Heart right ventricle (tissue), 16 donors: ENCODE measurements at regions of chr4 and their contacts with region 1.

Region 1: DNA sequence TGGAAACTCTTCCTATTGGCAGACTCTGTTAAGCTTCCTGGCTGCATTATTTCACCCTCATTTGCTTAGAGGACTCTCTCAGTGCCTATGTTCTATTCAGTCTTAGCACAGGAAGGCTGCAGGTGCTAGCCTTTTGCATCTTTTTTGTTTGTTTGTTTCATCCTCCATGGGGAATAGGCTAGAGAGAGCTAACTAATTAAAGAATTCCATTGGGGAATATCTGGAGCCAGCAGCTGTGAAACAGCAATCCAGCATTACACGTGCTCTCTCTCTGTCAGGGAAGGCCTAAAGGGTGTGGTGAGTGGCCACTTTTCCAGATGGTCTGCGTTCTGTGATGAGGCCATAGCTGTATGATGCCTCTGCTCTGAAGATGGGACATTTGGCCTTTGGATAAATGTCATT is 633.6 kb downstream of the SPRY1 start:
- DNase-seq: peak in 1 of 2 donors; percentile 54
- ATAC-seq: peak; percentile 88 to 98 (median 92)
- H3K4me3 ChIP-seq: no peak overlapping the region
- H3K27ac ChIP-seq: peak overlapping the region; percentile 5 to 69 (median 48)
- H3K4me1 ChIP-seq: peaks cover 0 to 39% (median 25%) of the 10 kb centered on the region in 9 donors
- H3K27me3 ChIP-seq: no peaks in the 10 kb centered on the region
- CTCF ChIP-seq: no peak

Region 2: GRCh38 chr4:123699880-123700771 is 330.0 kb before region 1 on chr4:
- intact Hi-C with region 1: no loop called
- DNase-seq: peak in 1 of 2 donors; percentile 13
- ATAC-seq: peak in 7 of 8 donors; percentile 66 to 92 (median 83)
- H3K4me3 ChIP-seq: no peak overlapping the region
- H3K27ac ChIP-seq: peak overlapping the region in 9 of 10 donors; percentile 38 to 78 (median 73)
- H3K4me1 ChIP-seq: peaks cover 0 to 12% (median 6%) of the 10 kb centered on the region in 9 donors
- H3K27me3 ChIP-seq: no peaks in the 10 kb centered on the region
- CTCF ChIP-seq: no peak

Region 3: DNA sequence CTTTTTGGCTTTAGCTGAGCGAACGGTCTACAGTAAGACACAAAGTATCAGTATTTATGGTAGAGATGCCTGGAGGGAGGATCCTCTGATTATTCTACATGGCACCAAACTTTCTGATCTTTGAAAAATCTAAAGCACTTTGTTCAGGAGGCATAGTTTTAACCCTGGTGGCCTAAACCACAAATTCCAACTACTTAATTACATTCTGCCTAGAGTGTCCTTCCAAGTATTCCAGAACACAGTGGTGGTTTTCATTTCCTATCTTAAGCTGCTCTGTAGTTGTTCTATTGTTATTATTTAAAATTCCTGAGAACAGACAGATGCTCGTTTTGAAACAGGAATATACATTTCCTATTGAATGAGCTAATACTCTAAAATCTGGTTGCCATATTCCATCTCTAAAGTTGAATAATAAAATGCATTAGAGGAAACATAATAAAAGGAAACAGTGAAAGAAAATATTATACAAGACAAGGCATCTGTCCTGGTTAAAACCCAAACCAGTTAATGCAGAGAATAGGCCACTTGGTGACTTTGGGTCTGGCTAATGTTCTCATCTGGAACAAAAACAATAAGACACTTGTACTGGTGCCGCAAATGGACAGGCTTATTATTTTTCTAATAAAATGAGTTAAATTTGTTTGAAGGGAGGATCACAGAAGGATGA is 23.8 kb after region 1 on chr4:
- intact Hi-C with region 1: loop called in 1 of 10 experiments (anchors 1 kb)
- DNase-seq: no peak
- ATAC-seq: no peak
- H3K4me3 ChIP-seq: no peak overlapping the region
- H3K27ac ChIP-seq: peak overlapping the region in 1 of 10 donors; percentile 34
- H3K4me1 ChIP-seq: peaks cover 0 to 8% (median 0%) of the 10 kb centered on the region in 9 donors
- H3K27me3 ChIP-seq: no peaks in the 10 kb centered on the region
- CTCF ChIP-seq: no peak

Region 4: DNA sequence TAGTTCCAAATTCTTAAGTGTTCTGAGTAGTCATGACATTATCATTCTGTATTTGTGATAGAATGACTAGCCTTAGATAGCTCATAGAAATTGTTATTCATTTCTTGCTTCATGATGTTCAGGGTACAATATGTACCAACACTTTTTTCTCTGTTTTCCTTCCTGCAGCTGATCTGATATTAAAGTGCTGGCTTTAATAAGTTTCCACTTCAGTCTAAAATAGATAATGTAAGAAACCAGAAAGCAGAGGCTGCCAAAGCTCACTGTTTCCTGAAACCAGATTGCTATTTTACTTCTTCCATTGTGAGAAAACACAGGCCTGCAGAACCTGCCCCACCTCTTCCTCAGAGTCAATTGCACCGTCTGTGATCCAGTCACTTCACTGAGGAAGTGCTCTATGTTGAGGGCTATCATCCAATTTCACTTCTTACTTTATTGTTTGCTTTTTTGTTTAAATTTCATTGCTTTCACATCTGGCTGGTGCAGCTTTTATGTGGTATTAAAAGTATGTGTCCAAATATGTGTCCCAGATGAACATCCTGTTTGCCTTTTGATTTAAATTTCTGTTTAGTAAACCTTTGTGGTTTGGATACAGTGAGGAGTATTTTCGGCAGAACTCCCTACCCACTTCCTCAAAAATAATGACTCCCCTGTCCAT is 30.2 kb after region 1 on chr4:
- intact Hi-C with region 1: loop called in 1 of 10 experiments (anchors 1 kb)
- DNase-seq: peak; percentile 13 to 73
- ATAC-seq: peak; percentile 76 to 97 (median 94)
- H3K4me3 ChIP-seq: no peak overlapping the region
- H3K27ac ChIP-seq: peak overlapping the region; percentile 57 to 93 (median 76)
- H3K4me1 ChIP-seq: peaks cover 0 to 44% (median 28%) of the 10 kb centered on the region in 9 donors
- H3K27me3 ChIP-seq: no peaks in the 10 kb centered on the region
- CTCF ChIP-seq: no peak

Region 5: DNA sequence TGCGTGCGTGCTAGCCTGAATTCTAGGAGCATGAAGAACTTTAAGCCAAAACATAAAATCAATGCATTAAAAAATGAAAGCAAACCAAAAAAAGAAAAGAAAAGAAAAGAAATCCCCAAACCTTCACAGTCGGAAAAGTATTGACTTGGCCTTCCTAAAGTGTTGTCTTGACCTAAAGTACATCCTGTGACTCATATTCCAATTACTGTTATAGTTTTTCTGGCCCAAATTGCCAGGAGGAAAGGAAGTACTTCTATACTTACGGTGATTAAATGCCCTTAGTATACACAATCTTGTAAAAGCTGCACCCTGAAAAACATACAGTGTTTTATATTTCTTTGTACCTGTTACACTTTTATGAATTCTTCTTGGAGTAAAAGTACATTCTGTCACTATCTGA is 169.6 kb after region 1 on chr4:
- intact Hi-C with region 1: no loop called
- DNase-seq: no peak
- ATAC-seq: no peak
- H3K4me3 ChIP-seq: no peak overlapping the region
- H3K27ac ChIP-seq: peak overlapping the region in 1 of 10 donors; percentile 5
- H3K4me1 ChIP-seq: peaks cover 0 to 8% (median 0%) of the 10 kb centered on the region in 9 donors
- H3K27me3 ChIP-seq: no peaks in the 10 kb centered on the region
- CTCF ChIP-seq: no peak